Activated CD4-positive, alpha-beta memory T cell treated with anti-CD3 and anti-CD28 coated beads, Interleukin-2, amount 10 ng/mL, durations not matched to agents 7 days and 5 days (primary cell): ENCODE measurements at regions of chr9 and their contacts with region 1.

Region 1: DNA sequence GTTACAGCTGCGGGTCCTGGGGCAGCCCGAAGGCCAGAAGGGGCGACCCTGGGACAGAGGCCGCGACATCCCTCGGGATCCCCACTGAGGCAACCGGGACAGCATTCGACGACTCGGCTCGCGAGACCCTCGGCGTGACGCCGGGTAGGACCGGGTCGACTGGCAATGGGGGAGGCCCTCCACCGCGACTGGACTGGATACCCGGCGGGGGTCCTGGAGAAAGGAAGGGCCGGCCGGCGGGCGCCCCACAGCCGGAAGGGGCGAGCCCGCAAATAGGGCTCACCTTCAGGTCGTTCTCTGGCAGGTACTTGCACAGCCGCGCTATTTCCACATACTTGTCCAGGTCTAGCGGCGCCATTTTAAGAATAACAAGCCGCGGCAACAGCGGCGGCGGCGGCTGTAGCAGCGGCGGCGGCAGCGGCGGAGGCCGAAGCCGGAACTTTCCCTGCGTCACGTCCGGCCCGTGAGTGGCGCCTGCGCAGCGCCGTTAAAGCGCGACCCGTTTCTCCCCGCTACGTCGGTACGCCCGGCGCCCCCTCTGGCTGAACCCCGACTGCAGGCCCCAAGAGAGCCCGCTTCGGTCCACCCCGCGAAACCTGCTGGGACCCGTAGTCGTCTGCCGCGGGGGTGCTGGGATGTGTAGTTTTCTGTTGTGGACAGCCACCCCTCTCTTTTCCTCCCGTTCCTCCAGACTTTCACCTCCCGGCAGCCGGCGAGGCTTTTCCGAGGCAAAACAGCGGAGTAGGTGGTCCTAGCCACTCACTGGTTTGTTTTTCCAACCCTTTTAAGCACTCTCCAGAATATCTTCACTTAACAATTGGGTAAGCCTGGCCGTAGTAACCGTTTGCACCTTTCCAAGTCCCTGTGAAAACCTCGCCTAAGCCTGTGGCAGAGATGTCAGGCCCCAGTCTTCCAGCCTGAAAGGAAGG is at the start of gene PPP6C:
- DNase-seq: peak; percentile 98
- H3K4me3 Mint-ChIP-seq: peak within 1 kb of the TSS; percentile 85
- H3K27ac Mint-ChIP-seq: peak within 1 kb of the TSS; percentile 91
- H3K4me1 Mint-ChIP-seq: peaks cover 43% of the 10 kb centered on the region
- H3K27me3 Mint-ChIP-seq: no peaks in the 10 kb centered on the region
- total RNA-seq, gene PPP6C: 56.4 to 57.6 TPM

Region 2: GRCh38 chr9:125172031-125172755 is 17.4 kb before region 1 on chr9:
- CTCF ChIA-PET with region 1: no interaction called
- POLR2A ChIA-PET with region 1: no interaction called
- DNase-seq: no peak
- H3K4me3 Mint-ChIP-seq: no peak overlapping the region
- H3K27ac Mint-ChIP-seq: peak overlapping the region; percentile 45
- H3K4me1 Mint-ChIP-seq: peaks cover 15% of the 10 kb centered on the region
- H3K27me3 Mint-ChIP-seq: no peaks in the 10 kb centered on the region

Region 3: DNA sequence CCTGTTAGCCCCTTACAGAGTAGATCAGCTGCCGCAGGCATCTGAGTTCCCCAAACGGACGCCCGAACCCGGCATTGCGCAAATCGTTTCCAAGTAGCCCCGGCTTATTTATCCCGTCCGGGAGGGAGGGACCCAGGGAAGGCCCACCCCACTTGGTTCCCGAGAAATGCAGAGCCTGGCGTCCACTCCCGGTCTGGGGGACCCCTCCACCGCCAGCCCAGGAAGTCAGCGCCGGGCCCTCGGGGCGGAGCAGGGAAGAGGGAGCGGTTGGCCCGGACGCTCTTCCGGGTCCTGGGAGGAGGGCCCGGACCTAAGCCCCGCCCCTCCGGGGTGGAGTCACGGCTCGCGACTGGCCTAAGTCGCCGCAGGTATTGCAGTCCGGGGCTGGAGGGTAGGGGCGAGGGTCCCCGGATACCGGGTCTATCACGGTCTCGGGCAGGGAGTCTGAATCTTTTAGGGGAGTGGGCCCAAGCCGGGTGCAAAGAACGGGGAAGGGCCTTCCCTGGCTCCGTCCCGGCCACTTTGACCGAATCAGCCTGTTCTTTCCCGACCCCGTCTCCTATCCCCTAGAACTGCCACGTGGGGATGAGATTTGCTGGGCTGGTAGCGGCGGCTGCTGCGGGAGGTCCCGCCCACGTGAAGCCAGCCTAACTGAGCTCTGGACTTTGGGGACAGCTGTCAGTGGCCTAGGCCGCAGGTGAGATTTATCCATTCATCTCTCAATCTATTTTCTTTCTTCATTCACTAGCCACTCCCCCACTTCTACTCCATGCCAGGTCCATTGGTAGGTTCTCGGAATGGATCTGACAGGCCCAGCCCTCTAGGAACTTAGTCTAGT is 10.8 kb after region 1 on chr9 and contains the start of gene RABEPK:
- CTCF ChIA-PET with region 1: interaction called, 14 read pairs
- POLR2A ChIA-PET with region 1: interaction called, 50 read pairs
- DNase-seq: peak; percentile 91
- H3K4me3 Mint-ChIP-seq: peak within 1 kb of the TSS; percentile 92
- H3K27ac Mint-ChIP-seq: peak within 1 kb of the TSS; percentile 83
- H3K4me1 Mint-ChIP-seq: peaks cover 22% of the 10 kb centered on the region
- H3K27me3 Mint-ChIP-seq: peaks cover 1% of the 10 kb centered on the region
- total RNA-seq, gene RABEPK: 11.8 to 12.1 TPM

Region 4: GRCh38 chr9:125233678-125234077 is 44.1 kb after region 1 on chr9:
- CTCF ChIA-PET with region 1: no interaction called
- POLR2A ChIA-PET with region 1: interaction called, 10 read pairs
- DNase-seq: no peak
- H3K4me3 Mint-ChIP-seq: no peak overlapping the region
- H3K27ac Mint-ChIP-seq: no peak overlapping the region
- H3K4me1 Mint-ChIP-seq: peaks cover 36% of the 10 kb centered on the region
- H3K27me3 Mint-ChIP-seq: no peaks in the 10 kb centered on the region